ENCODE measurements at regions of chr1 and their contacts with region 1.

Region 1: GRCh38 chr1:193537266-193538002 is 351.0 kb upstream of the B3GALT2 start:
- DNase-seq: peak; percentile 85
- H3K4me3 Mint-ChIP-seq: peak overlapping the region; percentile 17
- H3K27ac Mint-ChIP-seq: peak overlapping the region; percentile 74
- H3K4me1 Mint-ChIP-seq: peaks cover 47% of the 10 kb centered on the region
- H3K27me3 Mint-ChIP-seq: no peaks in the 10 kb centered on the region

Region 2: DNA sequence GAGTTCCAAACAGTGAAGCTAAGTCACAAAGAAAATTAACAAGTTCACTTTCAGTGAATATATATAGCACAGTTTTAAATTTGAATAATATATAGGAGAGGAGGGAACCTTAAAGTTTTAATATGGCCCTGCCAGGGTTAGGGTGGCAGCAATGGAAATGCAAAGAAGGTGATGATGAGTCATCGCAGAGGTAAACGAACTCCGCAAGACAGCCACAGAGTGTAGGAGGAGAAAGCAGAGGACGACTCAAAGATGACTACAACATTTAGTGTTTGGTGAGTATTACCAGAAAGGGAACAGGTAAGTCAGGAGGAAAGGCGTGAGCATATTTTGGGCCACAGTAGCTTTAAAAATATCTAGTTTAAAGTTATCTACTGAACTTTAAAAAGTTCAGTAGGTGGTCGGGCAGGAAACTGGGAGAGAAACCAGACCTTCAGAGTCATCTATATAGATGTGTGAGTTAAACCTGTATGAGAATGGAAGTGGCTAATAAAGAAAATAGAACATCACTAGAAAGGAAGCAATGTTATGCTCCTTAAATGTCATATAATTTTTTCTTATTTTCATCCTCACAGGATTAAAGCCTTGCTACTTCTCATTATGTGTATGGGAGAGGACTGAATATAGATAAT is 554.0 kb before region 1 on chr1:
- CTCF ChIA-PET with region 1: no interaction called
- POLR2A ChIA-PET with region 1: no interaction called
- intact Hi-C with region 1: loop called (anchors 5 kb)
- DNase-seq: peak; percentile 68
- H3K4me3 Mint-ChIP-seq: no peak overlapping the region
- H3K27ac Mint-ChIP-seq: peak overlapping the region; percentile 82
- H3K4me1 Mint-ChIP-seq: peaks cover 45% of the 10 kb centered on the region
- H3K27me3 Mint-ChIP-seq: no peaks in the 10 kb centered on the region

Region 3: GRCh38 chr1:193183019-193183627 is 354.3 kb before region 1 on chr1:
- CTCF ChIA-PET with region 1: no interaction called
- POLR2A ChIA-PET with region 1: no interaction called
- intact Hi-C with region 1: loop called (anchors 2 kb)
- DNase-seq: no peak
- H3K4me3 Mint-ChIP-seq: no peak overlapping the region
- H3K27ac Mint-ChIP-seq: no peak overlapping the region
- H3K4me1 Mint-ChIP-seq: peaks cover 41% of the 10 kb centered on the region
- H3K27me3 Mint-ChIP-seq: no peaks in the 10 kb centered on the region

Region 4: GRCh38 chr1:193456811-193457280 is 80.6 kb before region 1 on chr1:
- CTCF ChIA-PET with region 1: interaction called, 8 read pairs
- POLR2A ChIA-PET with region 1: interaction called, 32 read pairs
- intact Hi-C with region 1: loop called (anchors 1 kb)
- DNase-seq: no peak
- H3K4me3 Mint-ChIP-seq: no peak overlapping the region
- H3K27ac Mint-ChIP-seq: no peak overlapping the region
- H3K4me1 Mint-ChIP-seq: peaks cover 29% of the 10 kb centered on the region
- H3K27me3 Mint-ChIP-seq: no peaks in the 10 kb centered on the region

Region 5: DNA sequence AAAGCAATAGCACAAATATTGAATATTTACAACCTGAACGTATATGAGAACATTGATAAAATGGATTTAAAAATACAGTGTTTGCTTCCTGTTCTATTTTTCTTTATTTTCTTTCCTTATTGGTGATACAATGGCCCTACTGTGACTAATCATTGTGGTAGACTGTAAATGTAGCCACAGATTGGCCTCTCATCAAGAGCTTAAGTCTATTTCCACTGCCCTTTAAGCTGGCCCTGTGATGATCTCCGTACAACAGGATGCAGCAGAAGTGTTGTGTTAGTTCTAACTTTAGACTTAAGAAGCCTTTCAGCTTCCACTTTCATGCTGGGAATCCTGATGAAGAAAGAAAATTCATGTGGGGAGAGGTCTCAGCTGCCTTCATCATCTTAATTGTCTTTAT is 65.5 kb before region 1 on chr1:
- CTCF ChIA-PET with region 1: no interaction called
- POLR2A ChIA-PET with region 1: no interaction called
- intact Hi-C with region 1: no loop called
- DNase-seq: no peak
- H3K4me3 Mint-ChIP-seq: no peak overlapping the region
- H3K27ac Mint-ChIP-seq: no peak overlapping the region
- H3K4me1 Mint-ChIP-seq: peaks cover 27% of the 10 kb centered on the region
- H3K27me3 Mint-ChIP-seq: no peaks in the 10 kb centered on the region

Region 6: DNA sequence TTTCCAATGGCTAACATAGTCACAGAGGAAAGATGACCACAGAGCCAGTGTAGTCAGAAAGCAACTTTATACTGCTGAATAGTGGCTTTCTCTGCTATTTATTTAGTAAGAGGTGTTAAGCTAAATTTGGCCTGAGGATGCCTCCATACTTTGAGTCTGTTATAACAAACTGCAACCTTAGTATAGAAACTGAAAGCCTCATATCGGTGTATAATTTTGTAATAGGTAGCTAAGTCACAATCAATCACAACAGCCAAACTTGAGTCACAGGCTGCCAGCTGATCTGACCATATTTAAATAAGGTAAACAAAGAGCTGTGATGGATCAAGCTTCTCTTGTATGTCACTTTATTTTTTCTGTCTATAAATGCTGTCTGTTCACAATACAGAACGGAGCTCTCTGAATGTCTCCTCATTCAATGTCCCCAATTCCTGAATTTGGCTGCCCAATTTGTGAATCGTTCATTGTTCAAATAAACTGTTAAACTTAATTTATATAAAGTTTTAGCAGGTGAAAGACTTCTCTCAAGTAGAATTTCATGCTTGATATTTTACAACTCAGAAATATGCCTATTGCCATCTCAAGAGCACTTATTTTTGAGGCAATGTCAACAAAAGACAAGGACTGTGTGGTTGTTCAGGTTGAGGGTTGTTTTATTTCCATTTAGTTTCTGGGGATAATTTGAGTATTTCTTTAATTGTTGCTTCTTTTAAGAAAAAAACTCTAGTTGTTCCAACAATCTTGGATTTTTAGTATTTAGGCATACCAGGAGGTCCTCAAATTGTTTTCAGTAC is 11.3 kb before region 1 on chr1:
- CTCF ChIA-PET with region 1: no interaction called
- POLR2A ChIA-PET with region 1: interaction called, 3 read pairs
- intact Hi-C with region 1: loop called (anchors 1 kb)
- DNase-seq: no peak
- H3K4me3 Mint-ChIP-seq: no peak overlapping the region
- H3K27ac Mint-ChIP-seq: no peak overlapping the region
- H3K4me1 Mint-ChIP-seq: peaks cover 3% of the 10 kb centered on the region
- H3K27me3 Mint-ChIP-seq: no peaks in the 10 kb centered on the region

Region 7: GRCh38 chr1:193592317-193592716 is 54.9 kb after region 1 on chr1:
- CTCF ChIA-PET with region 1: no interaction called
- POLR2A ChIA-PET with region 1: interaction called, 3 read pairs
- intact Hi-C with region 1: loop called (anchors 2 kb)
- DNase-seq: no peak
- H3K4me3 Mint-ChIP-seq: no peak overlapping the region
- H3K27ac Mint-ChIP-seq: no peak overlapping the region
- H3K4me1 Mint-ChIP-seq: peaks cover 22% of the 10 kb centered on the region
- H3K27me3 Mint-ChIP-seq: no peaks in the 10 kb centered on the region

Region 8: GRCh38 chr1:194295685-194296084 is 758.3 kb after region 1 on chr1:
- CTCF ChIA-PET with region 1: no interaction called
- POLR2A ChIA-PET with region 1: no interaction called
- intact Hi-C with region 1: loop called (anchors 2 kb)
- DNase-seq: no peak
- H3K4me3 Mint-ChIP-seq: no peak overlapping the region
- H3K27ac Mint-ChIP-seq: no peak overlapping the region
- H3K4me1 Mint-ChIP-seq: peaks cover 49% of the 10 kb centered on the region
- H3K27me3 Mint-ChIP-seq: no peaks in the 10 kb centered on the region